Activated naive CD4-positive, alpha-beta T cell treated with anti-CD3 and anti-CD28 coated beads for 36 hours (primary cell): ENCODE measurements at regions of chr12 and their contacts with region 1.

Region 1: DNA sequence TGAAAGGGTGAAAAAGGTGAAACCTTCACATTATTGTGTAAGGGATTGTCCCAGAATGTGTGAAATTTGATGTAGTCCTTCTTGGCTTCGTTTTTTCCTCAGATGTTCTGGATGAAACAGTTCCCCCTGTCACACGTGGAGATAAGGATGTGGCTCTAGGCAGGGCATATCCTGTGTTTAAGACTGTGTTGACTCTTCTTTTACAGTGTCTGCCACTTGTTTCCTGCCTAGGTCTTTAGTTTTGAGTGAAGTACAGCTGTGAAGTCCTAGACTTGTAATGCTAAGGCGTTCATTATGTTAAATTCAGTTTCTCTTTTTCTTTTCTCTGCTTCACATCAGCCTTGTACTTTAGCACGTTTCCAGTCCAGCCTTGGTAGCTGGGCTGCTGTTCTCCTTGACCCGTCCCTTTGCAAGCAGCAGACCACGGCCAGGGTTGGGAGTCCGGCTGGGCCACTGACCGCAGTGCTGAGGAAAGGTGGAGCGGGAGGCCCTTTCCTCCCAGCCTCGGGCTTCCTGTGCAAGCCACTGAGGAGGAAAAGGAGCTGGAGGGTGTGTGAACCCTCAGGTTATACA is 59.1 kb downstream of the RASSF3 start:
- DNase-seq: peak; percentile 63
- H3K4me3 Mint-ChIP-seq: peak overlapping the region; percentile 78
- H3K27ac Mint-ChIP-seq: peak overlapping the region; percentile 92
- H3K4me1 Mint-ChIP-seq: peaks cover 93% of the 10 kb centered on the region
- H3K27me3 Mint-ChIP-seq: no peaks in the 10 kb centered on the region

Region 2: DNA sequence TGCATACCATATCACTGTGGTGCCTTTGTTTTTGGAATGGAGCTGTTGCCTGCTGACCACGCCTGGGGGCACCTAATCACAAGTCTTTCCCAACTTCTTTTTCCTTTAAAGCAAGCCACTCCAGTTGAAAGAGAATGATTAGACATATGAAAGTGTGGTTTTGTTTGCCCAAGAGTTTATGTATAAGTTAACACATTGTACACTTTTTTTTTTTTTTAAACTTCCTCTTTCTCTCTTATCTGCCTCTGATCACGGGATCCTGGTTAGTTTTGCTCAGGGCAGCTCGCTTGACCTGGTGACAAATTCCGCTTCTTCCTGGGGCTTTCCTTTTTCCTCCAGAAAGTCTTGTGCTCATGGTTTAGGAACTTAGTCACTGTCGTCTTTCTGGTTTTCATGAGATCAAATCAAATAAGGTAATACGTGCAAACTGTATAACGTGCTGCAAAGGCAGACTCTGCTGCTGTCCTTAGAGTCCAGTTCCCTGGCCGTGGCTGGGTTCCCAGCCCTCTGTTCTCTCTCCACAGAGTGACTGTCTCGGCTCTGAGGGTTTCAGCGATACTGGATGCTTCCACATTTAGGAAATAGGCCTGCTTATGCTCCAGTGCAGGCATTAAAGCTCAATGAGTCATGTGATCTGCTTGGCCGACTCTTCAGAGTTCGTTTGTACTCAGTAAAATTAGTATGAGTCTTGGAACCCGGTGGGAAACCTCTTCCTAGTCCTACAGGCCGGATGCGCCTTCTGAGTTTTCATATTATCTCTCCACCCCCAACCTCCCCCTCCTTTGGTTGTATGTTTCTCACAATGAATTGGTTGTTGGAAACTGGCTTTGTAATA is 43.9 kb before region 1 on chr12:
- CTCF ChIA-PET with region 1: interaction called, 5 read pairs
- intact Hi-C with region 1: loop called (anchors 1 kb)
- DNase-seq: peak; percentile 62
- H3K4me3 Mint-ChIP-seq: peak overlapping the region; percentile 57
- H3K27ac Mint-ChIP-seq: peak overlapping the region; percentile 86
- H3K4me1 Mint-ChIP-seq: peaks cover 69% of the 10 kb centered on the region
- H3K27me3 Mint-ChIP-seq: no peaks in the 10 kb centered on the region

Region 3: GRCh38 chr12:64635356-64635998 is 33.9 kb before region 1 on chr12:
- CTCF ChIA-PET with region 1: interaction called, 3 read pairs
- intact Hi-C with region 1: loop called (anchors 1 kb)
- DNase-seq: no peak
- H3K4me3 Mint-ChIP-seq: no peak overlapping the region
- H3K27ac Mint-ChIP-seq: peak overlapping the region; percentile 79
- H3K4me1 Mint-ChIP-seq: peaks cover 86% of the 10 kb centered on the region
- H3K27me3 Mint-ChIP-seq: no peaks in the 10 kb centered on the region

Region 4: GRCh38 chr12:64646318-64646717 is 23.0 kb before region 1 on chr12:
- CTCF ChIA-PET with region 1: no interaction called
- intact Hi-C with region 1: no loop called
- DNase-seq: no peak
- H3K4me3 Mint-ChIP-seq: no peak overlapping the region
- H3K27ac Mint-ChIP-seq: peak overlapping the region; percentile 56
- H3K4me1 Mint-ChIP-seq: peaks cover 72% of the 10 kb centered on the region
- H3K27me3 Mint-ChIP-seq: no peaks in the 10 kb centered on the region